ENCODE measurements at regions of chr10 and their contacts with region 1.

Region 1: GRCh38 chr10:71893920-71894319 is 42.9 kb upstream of the PSAP start:
- DNase-seq: no peak
- ATAC-seq: no peak
- H3K4me3 ChIP-seq: no peak overlapping the region
- H3K27ac ChIP-seq: no peak overlapping the region
- H3K4me1 ChIP-seq: peaks cover 5 to 7% of the 10 kb centered on the region in 2 donors
- H3K27me3 ChIP-seq: no peaks in the 10 kb centered on the region
- CTCF ChIP-seq: no peak
- POLR2A ChIP-seq: no peak

Region 2: DNA sequence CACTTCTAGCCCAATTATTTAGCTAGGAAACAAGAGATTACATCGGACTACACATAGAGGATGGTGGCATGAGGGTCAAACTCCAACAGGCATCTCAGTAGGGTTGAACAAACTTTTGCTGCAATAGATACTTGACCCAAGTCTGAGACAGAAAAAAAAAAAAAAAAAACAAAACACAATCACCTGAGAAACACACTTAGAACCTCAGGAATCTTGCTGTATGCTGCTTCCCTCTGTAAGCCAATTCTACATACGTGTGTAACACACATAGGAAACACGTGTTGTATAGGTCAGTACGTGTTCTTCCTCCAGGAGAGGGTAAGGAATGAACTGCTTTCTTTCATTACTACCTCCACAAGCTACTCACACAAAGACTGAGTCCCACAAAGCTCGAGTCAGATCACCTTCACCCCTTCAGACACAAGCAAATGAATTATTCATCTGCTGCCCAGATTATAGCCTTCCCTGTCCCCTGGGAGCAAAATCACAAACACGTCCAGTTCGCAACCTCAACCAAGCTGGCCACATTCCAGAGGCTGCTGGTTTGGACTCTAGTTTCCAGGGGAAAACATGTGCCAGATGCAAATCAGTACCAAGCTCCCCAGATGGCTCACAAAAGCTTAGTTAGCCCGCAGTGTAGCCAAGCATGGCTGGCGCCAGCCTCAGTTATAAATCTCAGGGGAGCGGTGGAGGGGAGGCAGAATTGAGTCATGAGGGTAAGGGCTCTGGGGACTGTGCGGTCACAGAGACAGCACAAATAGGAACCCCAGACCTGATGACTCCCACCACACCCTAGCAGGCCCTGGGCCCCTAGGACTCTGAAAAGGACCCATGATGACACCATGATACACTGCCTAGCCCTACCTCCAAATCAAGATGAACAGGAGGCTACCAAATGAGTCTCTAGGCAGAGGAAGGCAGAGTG is 58.0 kb before region 1 on chr10:
- in situ Hi-C with region 1: loop called (anchors 5 to 10 kb)
- intact Hi-C with region 1: loop called (anchors 1 kb)
- DNase-seq: peak; percentile 67 to 73
- ATAC-seq: peak; percentile 55 to 66
- H3K4me3 ChIP-seq: peak overlapping the region in 2 of 4 donors; percentile 7 to 28
- H3K27ac ChIP-seq: peak overlapping the region; percentile 81 to 99 (median 97)
- H3K4me1 ChIP-seq: peaks cover 71 to 73% of the 10 kb centered on the region in 2 donors
- H3K27me3 ChIP-seq: no peaks in the 10 kb centered on the region
- CTCF ChIP-seq: no peak
- POLR2A ChIP-seq: no peak

Region 3: GRCh38 chr10:71998840-71999194 is 104.9 kb after region 1 on chr10:
- in situ Hi-C with region 1: no loop called
- intact Hi-C with region 1: no loop called
- DNase-seq: peak; percentile 85 to 86
- ATAC-seq: peak; percentile 87 to 88
- H3K4me3 ChIP-seq: no peak overlapping the region
- H3K27ac ChIP-seq: peak overlapping the region; percentile 69 to 86 (median 82)
- H3K4me1 ChIP-seq: peaks cover 69 to 72% of the 10 kb centered on the region in 2 donors
- H3K27me3 ChIP-seq: no peaks in the 10 kb centered on the region
- CTCF ChIP-seq: no peak
- POLR2A ChIP-seq: no peak

Measured in gastrocnemius medialis (tissue), 4 donors.